GM12878 (cell line): ENCODE measurements at regions of chr6 and their contacts with region 1.

Region 1: DNA sequence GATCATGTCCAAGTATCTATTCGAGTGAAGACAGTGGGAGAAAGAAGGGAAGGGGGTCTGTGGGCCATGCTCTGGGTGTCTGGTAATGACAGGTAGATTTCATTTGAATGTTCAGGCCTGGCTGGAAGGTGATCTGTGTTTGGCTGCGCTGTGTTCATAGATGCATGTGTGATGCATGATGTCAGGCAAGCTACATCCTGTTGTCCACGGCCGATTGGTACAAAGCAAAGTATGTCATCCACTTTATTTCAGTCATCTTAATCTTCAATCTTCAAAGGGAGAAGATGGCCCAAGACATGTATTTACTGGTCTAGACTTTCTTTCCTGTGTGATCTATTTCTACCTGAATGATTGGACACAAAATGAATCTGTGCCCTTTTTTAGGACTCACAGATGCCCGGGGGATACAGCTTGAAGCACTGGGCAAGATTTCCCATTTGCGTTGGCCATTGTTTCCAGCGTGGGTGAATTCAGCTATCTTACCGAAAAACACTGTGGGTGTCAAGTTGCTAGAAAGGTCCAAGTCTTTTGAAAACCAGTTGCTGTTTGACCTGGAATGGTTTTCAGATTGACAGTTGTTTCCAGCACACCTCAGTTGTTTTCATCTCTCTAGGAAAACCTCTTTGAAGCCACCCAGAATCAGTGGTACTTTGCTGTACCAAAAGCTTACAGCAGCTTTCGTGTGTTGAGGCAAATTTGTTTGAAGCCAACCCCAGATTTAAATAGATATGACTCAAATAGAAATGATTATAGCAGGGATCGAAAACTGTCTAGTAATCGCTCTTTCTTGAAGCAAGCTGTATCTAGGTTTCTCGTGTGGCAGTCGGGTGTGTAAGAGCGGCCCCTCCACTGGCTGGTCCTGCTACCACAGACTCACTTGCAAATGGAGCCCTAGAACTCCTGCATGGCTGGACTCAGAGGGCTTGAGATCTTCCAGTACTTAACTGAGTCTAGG is 27.2 kb downstream of the DUSP22 start:
- DNase-seq: peak; percentile 95
- ATAC-seq: peak; percentile 50
- H3K4me3 ChIP-seq: peak overlapping the region; percentile 57
- H3K27ac ChIP-seq: peak overlapping the region; percentile 92
- H3K4me1 ChIP-seq: peaks cover 98% of the 10 kb centered on the region
- H3K27me3 ChIP-seq: no peaks in the 10 kb centered on the region
- CTCF ChIP-seq: no peak
- EP300 ChIP-seq: peak; percentile 72 to 85; a peak in 3 of 4 replicates
- POLR2A ChIP-seq: no peak
- RAD21 ChIP-seq: no peak

Region 2: GRCh38 chr6:286681-287488 is 32.6 kb before region 1 on chr6:
- CTCF ChIA-PET with region 1: interaction called, 6 read pairs
- POLR2A ChIA-PET with region 1: interaction called, 17 read pairs
- RAD21 ChIA-PET with region 1: interaction called, 16 read pairs
- SMC1A ChIA-PET with region 1: interaction called, 118 read pairs
- in situ Hi-C with region 1: no loop called
- intact Hi-C with region 1: loop called (anchors 1 kb)
- DNase-seq: no peak
- ATAC-seq: peak; percentile 48
- H3K4me3 ChIP-seq: peak overlapping the region; percentile 2; the same call in 1 of the 2 replicates
- H3K27ac ChIP-seq: peak overlapping the region; percentile 53
- H3K4me1 ChIP-seq: peaks cover 54% of the 10 kb centered on the region
- H3K27me3 ChIP-seq: no peaks in the 10 kb centered on the region
- CTCF ChIP-seq: no peak
- EP300 ChIP-seq: 0 out of 4 replicates have a peak, but pooled peaks have one; percentile 42 to 61
- POLR2A ChIP-seq: no peak
- RAD21 ChIP-seq: 0 out of 2 replicates have a peak, but pooled peaks have one; percentile 7

Region 3: DNA sequence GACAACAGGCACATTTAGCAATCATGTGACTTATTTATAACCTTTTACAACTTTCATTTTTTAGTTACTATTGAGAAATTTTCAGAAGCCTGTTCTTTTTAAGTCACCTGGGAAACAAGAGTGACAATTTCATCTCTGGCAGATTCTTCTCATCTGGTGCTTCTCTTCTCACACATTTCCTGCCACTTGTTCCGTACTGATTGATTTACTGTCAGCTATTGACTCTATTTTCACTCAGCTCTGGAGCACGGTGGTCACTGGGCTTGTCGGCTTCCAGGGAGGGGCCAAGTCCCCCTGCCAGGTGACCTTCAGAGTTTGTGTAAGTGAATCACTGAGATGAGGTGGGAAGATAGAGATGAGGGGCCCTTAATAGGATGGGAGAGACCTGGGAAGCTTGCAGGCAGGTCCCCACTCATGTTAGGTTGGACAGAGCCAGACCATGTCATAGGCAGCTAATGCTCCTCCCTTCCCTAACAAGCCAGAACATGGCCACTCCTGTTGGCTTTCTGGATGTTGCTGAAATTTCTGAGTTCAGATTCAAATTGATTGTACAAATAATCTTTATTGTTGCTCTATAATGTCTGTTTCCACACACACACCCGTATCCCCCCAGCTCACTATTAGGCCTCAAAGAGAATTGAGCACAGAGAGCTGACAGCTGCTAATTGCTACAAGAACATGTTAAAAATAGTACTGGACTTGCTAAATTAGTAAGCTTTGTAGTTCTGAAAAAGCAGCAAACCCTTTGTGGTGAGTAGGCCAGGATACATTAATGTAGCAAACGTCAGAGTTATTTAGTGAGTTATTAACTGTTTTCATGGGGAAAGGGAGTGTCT is 13.9 kb before region 1 on chr6:
- CTCF ChIA-PET with region 1: interaction called, 94 read pairs
- POLR2A ChIA-PET with region 1: interaction called, 227 read pairs
- RAD21 ChIA-PET with region 1: interaction called, 235 read pairs
- SMC1A ChIA-PET with region 1: interaction called, 221 read pairs
- in situ Hi-C with region 1: no loop called
- intact Hi-C with region 1: loop called (anchors 1 kb)
- DNase-seq: peak; percentile 97
- ATAC-seq: peak; percentile 84
- H3K4me3 ChIP-seq: peak overlapping the region; percentile 26; the same call in 1 of the 2 replicates
- H3K27ac ChIP-seq: peak overlapping the region; percentile 100
- H3K4me1 ChIP-seq: peaks cover 77% of the 10 kb centered on the region
- H3K27me3 ChIP-seq: no peaks in the 10 kb centered on the region
- CTCF ChIP-seq: no peak
- EP300 ChIP-seq: peak; percentile 100
- POLR2A ChIP-seq: no peak
- RAD21 ChIP-seq: peak; percentile 30; the same call in 1 of the 2 replicates

Region 4: DNA sequence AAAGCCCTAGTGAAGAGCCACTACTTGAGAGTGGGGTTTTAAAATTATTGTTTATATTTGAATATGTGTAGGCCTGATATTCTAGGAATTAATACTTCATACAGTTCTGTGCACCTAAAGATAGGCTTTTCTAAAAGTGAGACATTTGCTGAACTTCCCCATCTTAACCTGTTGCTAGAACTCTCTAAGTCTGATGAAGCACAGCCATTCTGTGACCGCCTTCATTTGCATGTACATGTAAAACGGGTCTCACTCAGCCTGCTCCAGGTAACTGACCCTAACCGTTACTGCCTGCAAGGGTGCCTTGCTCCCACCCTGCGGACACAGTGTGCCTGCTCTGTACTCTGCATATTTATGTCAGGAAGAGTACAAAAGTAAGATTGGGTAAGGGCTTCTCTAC is 27.8 kb after region 1 on chr6:
- CTCF ChIA-PET with region 1: interaction called, 64 read pairs
- POLR2A ChIA-PET with region 1: interaction called, 150 read pairs
- RAD21 ChIA-PET with region 1: interaction called, 256 read pairs
- SMC1A ChIA-PET with region 1: interaction called, 707 read pairs
- in situ Hi-C with region 1: no loop called
- intact Hi-C with region 1: loop called (anchors 1 kb)
- DNase-seq: no peak
- ATAC-seq: peak; percentile 68
- H3K4me3 ChIP-seq: peak overlapping the region; percentile 24; the same call in 1 of the 2 replicates
- H3K27ac ChIP-seq: peak overlapping the region; percentile 84
- H3K4me1 ChIP-seq: peaks cover 64% of the 10 kb centered on the region
- H3K27me3 ChIP-seq: no peaks in the 10 kb centered on the region
- CTCF ChIP-seq: peak in 1 of 3 experiments; percentile 9; a peak in 1 of 6 replicates
- EP300 ChIP-seq: no peak; a peak in 1 of 4 replicates
- POLR2A ChIP-seq: no peak
- RAD21 ChIP-seq: peak; percentile 58

Region 5: GRCh38 chr6:391559-392440 is 72.3 kb after region 1 on chr6 and contains the start of gene IRF4:
- CTCF ChIA-PET with region 1: interaction called, 5 read pairs
- POLR2A ChIA-PET with region 1: interaction called, 7 read pairs
- RAD21 ChIA-PET with region 1: interaction called, 6 read pairs
- SMC1A ChIA-PET with region 1: interaction called, 14 read pairs
- in situ Hi-C with region 1: no loop called
- intact Hi-C with region 1: no loop called
- DNase-seq: no peak
- ATAC-seq: peak; percentile 63
- H3K4me3 ChIP-seq: peak within 1 kb of the TSS; percentile 95
- H3K27ac ChIP-seq: peak within 1 kb of the TSS; percentile 97
- H3K4me1 ChIP-seq: peaks cover 33% of the 10 kb centered on the region
- H3K27me3 ChIP-seq: no peaks in the 10 kb centered on the region
- CTCF ChIP-seq: no peak
- EP300 ChIP-seq: no peak
- POLR2A ChIP-seq: peak; percentile 77
- RAD21 ChIP-seq: peak; percentile 25; the same call in 1 of the 2 replicates
- polyA plus RNA-seq, gene IRF4: 50.0 to 98.9 TPM

Region 6: GRCh38 chr6:422433-423054 is 103.1 kb after region 1 on chr6:
- CTCF ChIA-PET with region 1: no interaction called
- POLR2A ChIA-PET with region 1: no interaction called
- RAD21 ChIA-PET with region 1: no interaction called
- SMC1A ChIA-PET with region 1: no interaction called
- in situ Hi-C with region 1: no loop called
- intact Hi-C with region 1: no loop called
- DNase-seq: no peak
- ATAC-seq: peak; percentile 98
- H3K4me3 ChIP-seq: no peak overlapping the region
- H3K27ac ChIP-seq: no peak overlapping the region
- H3K4me1 ChIP-seq: peaks cover 5% of the 10 kb centered on the region
- H3K27me3 ChIP-seq: no peaks in the 10 kb centered on the region
- CTCF ChIP-seq: no peak
- EP300 ChIP-seq: 0 out of 4 replicates have a peak, but pooled peaks have one; percentile 17 to 19
- POLR2A ChIP-seq: no peak
- RAD21 ChIP-seq: peak; percentile 23; the same call in 1 of the 2 replicates

Region 7: GRCh38 chr6:579339-579738 is 259.9 kb after region 1 on chr6:
- CTCF ChIA-PET with region 1: no interaction called
- POLR2A ChIA-PET with region 1: no interaction called
- RAD21 ChIA-PET with region 1: no interaction called
- SMC1A ChIA-PET with region 1: no interaction called
- in situ Hi-C with region 1: no loop called
- intact Hi-C with region 1: no loop called
- DNase-seq: no peak
- ATAC-seq: no peak
- H3K4me3 ChIP-seq: no peak overlapping the region
- H3K27ac ChIP-seq: no peak overlapping the region
- H3K4me1 ChIP-seq: no peaks in the 10 kb centered on the region
- H3K27me3 ChIP-seq: no peaks in the 10 kb centered on the region
- CTCF ChIP-seq: no peak; a peak in 1 of 6 replicates
- EP300 ChIP-seq: no peak
- POLR2A ChIP-seq: no peak
- RAD21 ChIP-seq: no peak

Region 8: DNA sequence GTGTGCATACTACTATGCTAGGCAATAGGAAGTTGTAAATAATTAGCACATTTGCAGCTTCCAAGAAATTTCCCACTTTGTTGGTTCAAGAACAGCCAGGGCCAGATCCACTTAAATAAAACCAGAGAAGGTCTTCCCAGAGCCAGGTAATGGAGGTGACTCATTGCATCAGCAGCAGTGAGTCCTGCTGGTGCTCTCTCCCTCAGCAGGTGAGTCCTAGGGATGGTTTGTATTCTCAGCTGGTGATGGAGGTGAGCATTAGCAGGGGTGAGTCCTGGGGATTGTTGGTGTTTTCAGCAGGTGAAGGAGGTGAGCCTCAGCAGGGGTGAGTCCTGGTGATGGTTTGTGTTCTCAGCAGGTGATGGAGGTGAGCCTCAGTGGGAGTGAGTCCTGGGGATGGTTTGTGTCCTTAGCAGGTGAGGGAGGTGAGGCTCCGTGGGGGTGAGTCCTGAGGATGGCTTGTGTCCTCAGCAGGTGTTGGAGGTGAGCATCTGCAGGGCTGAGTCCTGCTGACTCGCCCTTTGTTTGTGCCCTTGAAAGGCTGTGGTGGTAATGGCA is 606.3 kb after region 1 on chr6:
- CTCF ChIA-PET with region 1: no interaction called
- POLR2A ChIA-PET with region 1: no interaction called
- RAD21 ChIA-PET with region 1: no interaction called
- SMC1A ChIA-PET with region 1: no interaction called
- in situ Hi-C with region 1: no loop called
- intact Hi-C with region 1: no loop called
- DNase-seq: no peak
- ATAC-seq: no peak
- H3K4me3 ChIP-seq: no peak overlapping the region
- H3K27ac ChIP-seq: no peak overlapping the region
- H3K4me1 ChIP-seq: no peaks in the 10 kb centered on the region
- H3K27me3 ChIP-seq: no peaks in the 10 kb centered on the region
- CTCF ChIP-seq: no peak
- EP300 ChIP-seq: no peak
- POLR2A ChIP-seq: no peak
- RAD21 ChIP-seq: no peak